Breast epithelium (tissue), 4 donors: ENCODE measurements at regions of chr18 and their contacts with region 1.

Region 1: GRCh38 chr18:76234291-76235060 is 260.6 kb downstream of the ZNF516 start:
- DNase-seq: no peak
- H3K4me3 ChIP-seq: peak overlapping the region in 2 of 3 donors; percentile 18 to 33
- H3K27ac ChIP-seq: no peak overlapping the region
- H3K4me1 ChIP-seq: peaks cover 0 to 6% of the 10 kb centered on the region in 2 donors
- H3K27me3 ChIP-seq: no peaks in the 10 kb centered on the region
- CTCF ChIP-seq: no peak
- POLR2A ChIP-seq: no peak

Region 2: GRCh38 chr18:75984853-75985252 is 249.6 kb before region 1 on chr18:
- intact Hi-C with region 1: loop called (anchors 5 kb)
- DNase-seq: no peak
- H3K4me3 ChIP-seq: no peak overlapping the region
- H3K27ac ChIP-seq: no peak overlapping the region
- H3K4me1 ChIP-seq: no peaks in the 10 kb centered on the region
- H3K27me3 ChIP-seq: no peaks in the 10 kb centered on the region
- CTCF ChIP-seq: no peak
- POLR2A ChIP-seq: no peak

Region 3: DNA sequence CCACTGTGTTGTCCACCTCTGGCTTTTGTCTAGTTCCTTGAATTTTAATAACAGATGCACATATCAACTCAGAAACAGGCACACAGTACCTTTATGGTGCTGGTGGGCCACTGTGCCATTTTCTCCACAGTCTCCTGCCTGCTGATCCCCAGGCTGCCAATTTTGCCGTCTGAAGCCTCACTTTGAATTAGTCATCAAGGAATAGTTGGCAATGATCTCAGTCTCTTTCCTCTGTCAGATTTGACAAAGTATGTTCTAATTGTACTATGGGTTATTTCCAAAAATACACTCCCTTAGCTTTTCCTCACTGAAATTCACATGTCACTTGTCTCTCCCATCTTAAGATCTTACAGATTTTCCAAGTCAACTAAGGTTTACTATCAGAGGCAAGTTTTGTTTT is 119.9 kb after region 1 on chr18:
- intact Hi-C with region 1: no loop called
- DNase-seq: no peak
- H3K4me3 ChIP-seq: no peak overlapping the region
- H3K27ac ChIP-seq: no peak overlapping the region
- H3K4me1 ChIP-seq: no peaks in the 10 kb centered on the region
- H3K27me3 ChIP-seq: no peaks in the 10 kb centered on the region
- CTCF ChIP-seq: no peak
- POLR2A ChIP-seq: no peak